GM10248 (cell line): ENCODE measurements at regions of chr6 and their contacts with region 1.

Region 1: GRCh38 chr6:17599885-17600526 is at the start of gene FAM8A1:
- DNase-seq: peak; percentile 95
- CTCF ChIP-seq: peak; percentile 31

Region 2: GRCh38 chr6:17446713-17447112 is 153.3 kb before region 1 on chr6:
- CTCF ChIA-PET with region 1: no interaction called
- POLR2A ChIA-PET with region 1: no interaction called
- DNase-seq: no peak
- CTCF ChIP-seq: no peak

Region 3: DNA sequence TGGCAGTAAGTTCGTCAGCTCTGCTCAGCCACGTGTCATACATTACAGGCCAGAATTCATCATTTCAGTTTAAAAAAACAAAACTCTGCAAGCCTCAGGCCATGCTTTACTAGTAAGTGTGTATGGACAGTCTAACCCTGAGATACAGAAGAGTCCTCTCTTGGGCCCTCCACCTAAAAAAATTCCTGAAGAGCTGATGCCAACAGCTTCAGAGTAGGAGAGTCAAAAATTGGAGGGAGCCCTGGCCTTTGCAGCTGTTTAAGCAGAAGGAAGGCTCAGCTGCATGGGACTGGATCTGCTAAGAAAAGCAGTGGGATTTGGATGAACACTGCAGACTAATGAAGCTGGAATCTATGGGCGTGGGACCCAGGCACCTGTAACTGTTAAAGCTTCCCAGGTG is 47.1 kb before region 1 on chr6:
- CTCF ChIA-PET with region 1: no interaction called
- POLR2A ChIA-PET with region 1: no interaction called
- DNase-seq: no peak
- CTCF ChIP-seq: no peak

Region 4: GRCh38 chr6:17820055-17820454 is 220.0 kb after region 1 on chr6:
- CTCF ChIA-PET with region 1: interaction called, 11 read pairs
- POLR2A ChIA-PET with region 1: no interaction called
- DNase-seq: no peak
- CTCF ChIP-seq: no peak